Head of caudate nucleus (tissue), 42 donors: ENCODE measurements at regions of chr2 and their contacts with region 1.

Region 1: DNA sequence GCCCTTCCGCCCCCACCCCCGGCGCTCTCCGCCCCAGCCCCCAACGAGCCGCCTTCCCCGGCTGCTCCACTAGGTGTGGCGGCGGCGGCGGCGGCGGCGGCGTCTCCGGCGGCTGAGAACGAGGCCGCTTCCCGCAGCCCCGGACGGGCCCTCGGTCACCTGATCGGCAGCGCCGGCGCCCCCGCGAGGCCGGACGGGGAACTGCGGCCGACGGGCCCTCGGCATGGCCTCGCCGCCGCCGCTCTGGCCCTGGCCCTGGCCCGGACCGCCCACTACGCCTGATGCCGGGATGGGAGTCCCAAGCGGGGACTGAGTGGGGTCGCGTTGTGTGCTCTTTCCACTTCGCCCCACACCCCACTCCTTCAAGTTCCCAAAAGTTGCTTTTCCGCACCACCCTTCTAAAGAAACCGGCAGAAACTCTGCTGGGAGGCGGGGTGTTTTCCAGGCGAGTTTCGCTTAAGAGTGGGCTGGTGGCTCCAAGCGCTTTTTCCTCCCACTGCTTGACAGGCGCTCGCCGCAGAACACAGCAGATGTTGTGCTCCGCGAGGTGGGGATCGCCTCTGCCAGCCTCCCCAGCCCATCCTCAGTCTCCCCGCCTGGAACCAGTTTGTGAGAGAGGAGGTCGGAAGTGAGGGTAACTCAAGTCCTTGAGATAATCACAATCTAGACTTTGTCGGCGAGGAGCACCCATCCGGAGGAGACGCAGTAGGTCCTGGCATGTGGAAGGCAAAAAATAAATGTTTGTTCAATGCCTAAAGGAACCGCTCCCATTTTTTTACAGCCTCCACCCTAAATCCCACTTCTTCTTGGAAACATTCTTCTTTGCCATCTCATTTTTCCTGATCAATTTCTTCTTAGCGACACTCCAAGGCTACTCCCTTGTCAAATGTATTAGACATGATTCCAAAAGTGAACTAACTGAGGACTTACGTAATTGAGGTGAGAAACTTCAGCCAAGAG is at the start of gene NCKAP1:
- DNase-seq: peak; percentile 53 to 94 (median 87)

Region 2: GRCh38 chr2:183078465-183079138 is 40.0 kb after region 1 on chr2 and contains the start of gene DUSP19:
- intact Hi-C with region 1: loop called (anchors 5 kb)
- DNase-seq: peak; percentile 70 to 97 (median 91)

Region 3: GRCh38 chr2:183214680-183215079 is 176.1 kb after region 1 on chr2:
- intact Hi-C with region 1: no loop called
- DNase-seq: no peak